Activated CD4-positive, alpha-beta T cell treated with anti-CD3 and anti-CD28 coated beads, Interleukin-2, amount 10 ng/mL, durations not matched to agents 24 days and 14 days (primary cell): ENCODE measurements at regions of chr19 and their contacts with region 1.

Region 1: DNA sequence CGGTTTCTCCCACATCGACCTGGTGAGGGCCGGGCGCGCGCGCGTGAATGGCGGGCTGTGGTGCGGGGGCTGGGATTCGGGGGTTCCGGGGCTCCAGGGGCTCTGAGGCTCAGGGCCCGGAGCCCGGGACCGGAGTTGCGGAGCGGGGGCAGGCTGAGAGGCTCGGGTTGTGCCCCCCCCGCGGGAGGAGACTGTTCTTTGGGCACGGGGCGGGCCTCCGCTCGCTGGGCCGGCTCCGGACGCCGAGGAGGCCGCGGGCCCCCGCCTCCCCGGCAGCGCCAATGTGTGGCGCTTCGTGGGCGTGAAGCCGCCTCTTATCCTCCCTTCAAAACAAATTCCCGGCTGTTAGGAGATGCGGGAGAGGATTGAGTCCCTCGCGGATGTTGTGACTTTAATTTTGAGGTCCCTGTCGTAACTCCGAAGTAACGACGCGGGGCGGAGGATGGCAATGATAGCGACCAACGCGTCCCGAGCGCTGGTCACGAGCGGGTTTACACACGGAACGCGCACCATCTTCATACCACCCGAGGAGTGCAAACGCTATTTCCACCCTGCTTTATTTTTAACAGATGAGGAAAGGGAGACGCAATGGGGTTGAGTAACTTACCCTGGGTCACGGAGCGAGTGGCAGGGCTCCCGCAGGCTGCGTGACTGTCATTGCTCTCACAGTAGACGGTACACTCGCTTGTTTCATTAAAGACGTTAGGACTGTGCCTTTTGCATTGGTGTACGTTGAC is 536 bp downstream of the UBA2 start:
- DNase-seq: peak; percentile 85
- H3K4me3 Mint-ChIP-seq: peak overlapping the region; percentile 97
- H3K27ac Mint-ChIP-seq: peak overlapping the region; percentile 93
- H3K4me1 Mint-ChIP-seq: peaks cover 28% of the 10 kb centered on the region
- H3K27me3 Mint-ChIP-seq: no peaks in the 10 kb centered on the region

Region 2: GRCh38 chr19:34364830-34365462 is 63.8 kb before region 1 on chr19 and contains the start of gene GPI:
- intact Hi-C with region 1: loop called (anchors 2 kb)
- DNase-seq: peak; percentile 91
- H3K4me3 Mint-ChIP-seq: peak within 1 kb of the TSS; percentile 100
- H3K27ac Mint-ChIP-seq: peak within 1 kb of the TSS; percentile 96
- H3K4me1 Mint-ChIP-seq: peaks cover 57% of the 10 kb centered on the region
- H3K27me3 Mint-ChIP-seq: no peaks in the 10 kb centered on the region
- total RNA-seq, gene GPI: 592 and 598 TPM in 2 replicates

Region 3: DNA sequence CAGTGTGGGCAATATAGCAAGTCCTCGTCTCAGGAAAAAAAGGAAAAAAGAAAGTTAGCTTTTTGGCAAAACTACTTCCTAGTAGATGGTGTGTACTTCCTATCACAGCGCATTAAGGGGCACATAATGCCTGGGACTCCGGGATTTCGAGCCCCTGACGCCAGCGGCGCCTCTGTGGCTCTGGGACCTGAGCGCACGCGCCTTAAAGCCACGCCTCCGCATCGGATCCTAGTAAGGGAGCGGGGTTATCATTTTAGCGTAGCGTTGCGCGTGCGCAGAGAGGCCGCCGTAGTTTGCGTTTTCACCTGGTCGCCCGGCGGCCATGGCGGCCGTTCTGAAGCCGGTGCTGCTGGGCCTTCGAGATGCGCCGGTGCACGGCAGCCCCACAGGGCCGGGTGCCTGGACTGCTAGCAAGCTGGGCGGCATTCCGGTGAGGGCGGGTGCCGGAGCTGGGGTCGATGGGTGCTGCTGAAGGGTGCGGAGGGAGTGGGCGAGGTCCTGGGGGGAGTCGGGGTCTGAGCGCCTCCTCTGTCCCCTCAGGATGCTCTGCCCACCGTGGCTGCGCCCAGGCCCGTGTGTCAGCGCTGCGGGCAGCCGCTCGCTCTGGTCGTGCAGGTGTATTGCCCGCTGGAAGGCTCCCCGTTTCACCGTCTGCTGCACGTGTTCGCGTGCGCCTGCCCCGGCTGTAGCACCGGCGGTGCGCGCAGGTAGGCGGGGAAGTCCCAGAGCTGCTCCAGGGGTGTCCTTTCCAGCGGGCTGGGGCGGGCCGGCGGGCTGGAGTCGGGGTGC is 24.4 kb before region 1 on chr19 and contains the start of gene PDCD2L:
- intact Hi-C with region 1: loop called (anchors 1 kb)
- DNase-seq: peak; percentile 98
- H3K4me3 Mint-ChIP-seq: peak within 1 kb of the TSS; percentile 93
- H3K27ac Mint-ChIP-seq: peak within 1 kb of the TSS; percentile 94
- H3K4me1 Mint-ChIP-seq: peaks cover 8% of the 10 kb centered on the region
- H3K27me3 Mint-ChIP-seq: no peaks in the 10 kb centered on the region
- total RNA-seq, gene PDCD2L: 44.4 and 50.8 TPM in 2 replicates